ENCODE measurements at regions of chrX and their contacts with region 1.

Region 1: DNA sequence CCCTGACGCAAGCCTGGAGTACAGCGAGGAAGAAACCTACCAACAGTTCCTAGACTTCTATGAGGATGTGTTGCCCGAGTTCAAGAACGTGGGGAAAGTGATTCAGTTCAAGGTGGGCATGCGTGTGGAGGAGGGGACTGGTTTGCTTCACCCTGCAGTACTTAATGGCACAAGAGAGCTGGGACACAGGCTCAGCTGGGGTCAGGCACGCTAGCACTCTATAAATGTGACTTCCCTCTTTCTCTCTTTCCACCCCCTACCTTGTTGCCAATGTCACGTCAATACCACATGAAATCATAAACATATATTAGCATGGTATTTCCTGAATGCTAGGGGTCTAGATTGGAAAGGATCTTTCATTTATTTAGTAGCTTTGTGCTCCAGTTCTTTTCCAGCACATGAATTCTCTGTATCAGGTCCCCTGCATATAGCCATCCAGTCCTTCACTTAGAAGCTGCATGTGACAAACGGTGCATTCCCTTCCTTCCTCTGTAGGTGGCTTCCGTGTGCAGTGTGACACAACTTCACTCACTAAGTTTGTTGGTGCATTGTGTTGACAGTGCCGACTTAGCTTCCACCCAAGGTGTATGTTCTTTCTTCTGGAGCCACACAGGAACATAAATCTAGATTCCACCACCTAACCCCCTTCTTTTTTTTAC is 25.6 kb downstream of the ZRSR2 start:
- DNase-seq: no peak
- ATAC-seq: peak in 1 of 2 donors; percentile 44
- H3K4me3 ChIP-seq: no peak overlapping the region
- H3K27ac ChIP-seq: no peak overlapping the region
- H3K4me1 ChIP-seq: no peaks in the 10 kb centered on the region
- H3K27me3 ChIP-seq: no peaks in the 10 kb centered on the region
- CTCF ChIP-seq: no peak
- POLR2A ChIP-seq: no peak

Region 2: DNA sequence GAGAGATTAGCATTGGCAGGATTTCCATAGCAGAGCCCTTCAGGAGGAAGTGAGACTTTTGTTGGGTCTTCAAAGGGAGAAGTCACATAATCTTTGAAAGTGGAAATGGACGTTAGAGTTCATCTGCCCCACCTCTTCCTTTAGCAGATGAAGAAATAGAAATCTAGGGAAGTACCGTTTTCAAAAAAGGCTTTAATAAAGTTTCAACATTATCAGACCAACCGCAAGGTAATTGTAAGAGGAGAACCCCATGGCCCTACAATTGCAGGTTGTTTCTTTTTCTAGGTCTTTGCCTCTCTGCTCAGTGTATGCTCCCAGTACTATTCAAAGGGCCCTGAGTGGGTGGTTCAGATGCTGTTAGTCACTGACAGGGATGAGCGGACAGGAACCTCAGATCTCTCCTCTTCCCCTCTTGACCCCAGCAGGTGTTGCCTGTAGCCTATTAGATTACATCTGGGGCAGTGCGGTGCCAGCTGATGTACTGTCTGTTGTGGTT is 87.3 kb after region 1 on chrX:
- in situ Hi-C with region 1: loop called in 1 of 4 experiments (anchors 25 kb)
- intact Hi-C with region 1: no loop called
- DNase-seq: no peak
- ATAC-seq: no peak
- H3K4me3 ChIP-seq: no peak overlapping the region
- H3K27ac ChIP-seq: no peak overlapping the region
- H3K4me1 ChIP-seq: peaks cover 0 to 2% of the 10 kb centered on the region in 2 donors
- H3K27me3 ChIP-seq: no peaks in the 10 kb centered on the region
- CTCF ChIP-seq: no peak
- POLR2A ChIP-seq: no peak

Region 3: DNA sequence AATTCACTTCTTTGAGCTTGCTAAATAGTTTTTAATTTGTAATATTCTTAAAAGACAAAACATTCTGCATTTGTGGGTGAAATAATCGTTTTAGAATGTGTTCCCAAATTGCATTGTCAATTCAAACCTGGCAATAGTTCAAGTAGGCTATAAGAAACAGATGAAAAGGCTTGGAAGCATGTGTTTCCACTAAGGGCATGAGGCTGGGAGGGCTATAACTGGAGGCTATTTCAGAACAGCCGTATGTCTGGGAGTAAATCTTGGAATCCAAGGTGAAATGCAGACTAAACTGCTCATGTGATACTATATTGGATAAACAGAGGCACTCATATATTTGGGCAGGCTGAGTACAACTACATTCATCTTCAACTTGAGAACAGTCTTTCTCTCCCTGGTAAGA is 190.0 kb after region 1 on chrX:
- in situ Hi-C with region 1: no loop called
- intact Hi-C with region 1: no loop called
- DNase-seq: no peak
- ATAC-seq: no peak
- H3K4me3 ChIP-seq: no peak overlapping the region
- H3K27ac ChIP-seq: no peak overlapping the region
- H3K4me1 ChIP-seq: no peaks in the 10 kb centered on the region
- H3K27me3 ChIP-seq: no peaks in the 10 kb centered on the region
- CTCF ChIP-seq: no peak
- POLR2A ChIP-seq: no peak